Head of caudate nucleus (tissue), 42 donors: ENCODE measurements at regions of chr12 and their contacts with region 1.

Region 1: GRCh38 chr12:103012884-103013283 is 55.4 kb downstream of the ASCL1 start:
- DNase-seq: peak in 41 of 42 donors; percentile 4 to 80 (median 42)

Region 2: DNA sequence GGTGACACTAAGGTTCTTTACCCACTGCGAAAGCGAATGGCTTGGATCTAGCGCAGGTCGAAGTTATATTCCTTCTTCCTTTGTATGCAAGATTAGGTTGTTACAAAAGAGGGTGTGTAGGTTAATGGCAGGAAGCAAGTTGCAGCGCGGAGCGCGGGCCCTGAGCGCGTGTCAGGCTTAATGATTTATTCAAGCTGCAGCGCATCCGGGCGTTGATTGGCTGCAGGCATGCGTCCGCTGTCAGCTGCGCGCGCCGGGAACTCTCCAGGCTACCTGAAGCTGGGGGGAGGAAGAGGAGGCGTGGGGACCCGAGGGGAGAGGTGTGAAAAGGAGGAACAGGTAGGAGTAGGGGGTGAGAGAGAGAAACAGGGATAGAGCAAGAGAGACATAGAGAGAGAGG is 48.0 kb before region 1 on chr12:
- intact Hi-C with region 1: loop called (anchors 2 kb)
- DNase-seq: peak in 21 of 42 donors; percentile 12 to 57 (median 32)

Region 3: GRCh38 chr12:103105971-103106597 is 93.2 kb after region 1 on chr12:
- intact Hi-C with region 1: no loop called
- DNase-seq: no peak

Region 4: DNA sequence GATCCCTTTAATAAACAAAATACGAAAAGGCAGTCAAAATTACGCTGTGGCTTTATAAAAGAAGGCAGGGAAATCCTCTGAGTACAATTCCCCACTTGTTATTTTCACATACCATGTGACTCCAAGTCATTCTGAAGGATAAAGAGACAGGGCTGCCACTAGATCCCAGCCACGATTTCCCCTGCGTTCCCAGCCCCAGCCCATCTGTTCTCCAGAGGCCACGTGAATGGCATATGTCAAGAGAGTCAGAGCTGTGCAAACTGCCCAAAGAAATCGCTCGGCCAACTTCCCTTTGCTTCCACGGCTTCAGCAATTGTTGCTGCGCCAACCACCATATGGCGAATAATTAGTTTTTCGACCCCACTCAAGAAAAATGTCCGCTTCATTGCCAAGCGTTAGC is 321.6 kb after region 1 on chr12:
- intact Hi-C with region 1: no loop called
- DNase-seq: peak in 9 of 42 donors; percentile 1 to 30 (median 11)